ENCODE measurements at regions of chr17 and their contacts with region 1.

Region 1: GRCh38 chr17:74368092-74369081 is 1.1 kb downstream of the GPR142 start:
- DNase-seq: peak; percentile 74
- H3K4me3 Mint-ChIP-seq: no peak overlapping the region
- H3K27ac Mint-ChIP-seq: no peak overlapping the region
- H3K4me1 Mint-ChIP-seq: no peaks in the 10 kb centered on the region
- H3K27me3 Mint-ChIP-seq: peaks cover 27% of the 10 kb centered on the region
- CTCF ChIP-seq: peak; percentile 79

Region 2: DNA sequence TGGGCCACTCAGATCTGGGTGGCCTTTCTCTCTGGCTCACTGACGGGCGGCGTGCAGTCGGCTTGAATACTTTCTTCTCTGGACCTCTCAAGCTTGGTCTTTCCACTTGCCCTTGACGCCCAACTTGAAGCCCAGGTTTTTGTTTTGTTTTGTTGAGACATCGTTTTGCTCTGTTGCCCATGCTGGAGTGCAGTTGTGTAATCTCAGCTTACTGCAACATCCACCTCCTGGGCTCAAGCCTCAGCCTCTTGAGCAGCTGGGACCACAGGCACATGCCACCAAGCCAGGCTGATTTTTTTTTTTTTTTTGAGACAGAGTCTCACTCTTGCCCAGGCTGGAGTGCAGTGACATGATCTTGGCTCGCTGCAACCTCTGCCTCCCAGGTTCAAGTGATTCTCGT is 65.1 kb before region 1 on chr17:
- CTCF ChIA-PET with region 1: interaction called, 10 read pairs
- POLR2A ChIA-PET with region 1: no interaction called
- intact Hi-C with region 1: no loop called
- DNase-seq: peak; percentile 6
- H3K4me3 Mint-ChIP-seq: no peak overlapping the region
- H3K27ac Mint-ChIP-seq: no peak overlapping the region
- H3K4me1 Mint-ChIP-seq: peaks cover 6% of the 10 kb centered on the region
- H3K27me3 Mint-ChIP-seq: peaks cover 34% of the 10 kb centered on the region
- CTCF ChIP-seq: no peak

Region 3: DNA sequence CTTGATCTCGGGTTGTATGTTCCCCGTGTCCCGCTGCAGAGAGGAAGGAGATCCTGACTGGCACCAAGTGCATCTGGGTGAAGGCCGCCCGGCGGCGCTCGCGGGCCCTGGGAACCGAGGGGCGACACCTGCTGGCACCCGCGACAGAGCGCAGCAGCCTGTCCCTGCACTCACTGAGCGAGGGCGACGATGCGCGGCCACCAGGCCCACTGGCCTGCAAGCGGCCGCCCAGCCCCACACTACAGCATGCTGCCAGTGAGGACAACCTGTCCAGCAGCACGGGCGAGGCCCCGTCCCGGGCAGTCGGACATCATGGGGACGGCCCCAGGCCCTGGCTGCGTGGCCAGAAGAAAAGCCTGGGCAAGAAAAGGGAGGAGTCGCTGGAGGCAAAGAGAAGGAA is 14.3 kb before region 1 on chr17:
- CTCF ChIA-PET with region 1: interaction called, 13 read pairs
- POLR2A ChIA-PET with region 1: no interaction called
- intact Hi-C with region 1: no loop called
- DNase-seq: no peak
- H3K4me3 Mint-ChIP-seq: no peak overlapping the region
- H3K27ac Mint-ChIP-seq: no peak overlapping the region
- H3K4me1 Mint-ChIP-seq: no peaks in the 10 kb centered on the region
- H3K27me3 Mint-ChIP-seq: peaks cover 28% of the 10 kb centered on the region
- CTCF ChIP-seq: no peak

Region 4: DNA sequence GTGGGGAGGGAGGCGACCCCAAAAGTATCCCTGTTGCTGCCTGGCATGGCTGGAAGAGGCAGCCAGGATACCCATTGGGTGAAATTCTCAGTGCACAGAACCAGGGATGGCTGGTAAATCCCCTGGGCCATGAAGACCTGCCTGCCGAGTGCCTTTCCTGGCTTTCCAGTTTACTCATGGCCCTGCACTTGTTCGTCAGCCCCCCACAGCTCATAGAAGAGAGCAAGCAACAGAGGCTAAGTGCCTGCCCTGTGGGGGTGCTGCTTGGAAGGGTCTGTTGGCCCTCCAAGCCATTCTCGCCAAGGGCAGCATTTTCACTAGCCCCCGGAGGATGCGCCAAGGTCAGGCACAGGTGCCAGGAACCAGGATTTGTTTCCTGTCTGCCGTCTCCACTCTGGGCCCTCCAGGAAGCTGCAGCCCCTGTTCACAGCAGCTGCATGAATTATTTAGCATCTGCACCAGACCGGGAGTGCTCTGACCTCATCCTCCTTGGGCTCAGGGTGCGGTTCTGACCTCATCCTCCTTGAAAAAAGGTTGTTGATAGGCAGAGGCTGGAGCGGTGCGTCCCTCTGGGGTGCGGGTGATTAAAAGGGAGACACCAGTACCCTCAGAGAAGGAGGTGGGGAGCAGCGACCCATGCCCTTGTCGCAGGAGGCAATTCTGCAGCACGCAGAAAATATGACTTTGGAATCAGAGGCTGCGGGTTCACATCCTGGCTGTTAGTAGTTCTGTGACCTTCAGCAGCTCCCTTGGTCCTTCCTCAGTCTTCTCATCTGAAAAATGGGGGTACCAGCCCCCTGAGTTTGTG is 83.8 kb after region 1 on chr17:
- CTCF ChIA-PET with region 1: interaction called, 283 read pairs
- POLR2A ChIA-PET with region 1: no interaction called
- intact Hi-C with region 1: loop called (anchors 1 kb)
- DNase-seq: no peak
- H3K4me3 Mint-ChIP-seq: no peak overlapping the region
- H3K27ac Mint-ChIP-seq: no peak overlapping the region
- H3K4me1 Mint-ChIP-seq: peaks cover 13% of the 10 kb centered on the region
- H3K27me3 Mint-ChIP-seq: no peaks in the 10 kb centered on the region
- CTCF ChIP-seq: no peak

Region 5: GRCh38 chr17:74493381-74493833 is 125.0 kb after region 1 on chr17:
- CTCF ChIA-PET with region 1: interaction called, 10 read pairs
- POLR2A ChIA-PET with region 1: interaction called, 3 read pairs
- intact Hi-C with region 1: loop called (anchors 1 kb)
- DNase-seq: peak; percentile 70
- H3K4me3 Mint-ChIP-seq: no peak overlapping the region
- H3K27ac Mint-ChIP-seq: no peak overlapping the region
- H3K4me1 Mint-ChIP-seq: no peaks in the 10 kb centered on the region
- H3K27me3 Mint-ChIP-seq: peaks cover 28% of the 10 kb centered on the region
- CTCF ChIP-seq: peak; percentile 82

Region 6: GRCh38 chr17:74601944-74602572 is 233.7 kb after region 1 on chr17:
- CTCF ChIA-PET with region 1: interaction called, 11 read pairs
- POLR2A ChIA-PET with region 1: no interaction called
- intact Hi-C with region 1: no loop called
- DNase-seq: peak; percentile 80
- H3K4me3 Mint-ChIP-seq: no peak overlapping the region
- H3K27ac Mint-ChIP-seq: no peak overlapping the region
- H3K4me1 Mint-ChIP-seq: peaks cover 45% of the 10 kb centered on the region
- H3K27me3 Mint-ChIP-seq: no peaks in the 10 kb centered on the region
- CTCF ChIP-seq: peak; percentile 88